Dendritic cell treated with granulocyte-macrophage colony-stimulating factor and Interleukin-4, amounts not matched to agents 40 ng/mL and 50 ng/mL, for 4 days (primary cell): ENCODE measurements at regions of chr7 and their contacts with region 1.

Region 1: GRCh38 chr7:129664029-129665012 is 52.8 kb downstream of the NRF1 start:
- H3K4me3 Mint-ChIP-seq: no peak overlapping the region
- H3K27ac Mint-ChIP-seq: no peak overlapping the region
- H3K4me1 Mint-ChIP-seq: peaks cover 14% of the 10 kb centered on the region
- H3K27me3 Mint-ChIP-seq: no peaks in the 10 kb centered on the region

Region 2: GRCh38 chr7:129471402-129471827 is 192.9 kb before region 1 on chr7:
- intact Hi-C with region 1: no loop called
- H3K4me3 Mint-ChIP-seq: no peak overlapping the region
- H3K27ac Mint-ChIP-seq: no peak overlapping the region
- H3K4me1 Mint-ChIP-seq: no peaks in the 10 kb centered on the region
- H3K27me3 Mint-ChIP-seq: no peaks in the 10 kb centered on the region

Region 3: DNA sequence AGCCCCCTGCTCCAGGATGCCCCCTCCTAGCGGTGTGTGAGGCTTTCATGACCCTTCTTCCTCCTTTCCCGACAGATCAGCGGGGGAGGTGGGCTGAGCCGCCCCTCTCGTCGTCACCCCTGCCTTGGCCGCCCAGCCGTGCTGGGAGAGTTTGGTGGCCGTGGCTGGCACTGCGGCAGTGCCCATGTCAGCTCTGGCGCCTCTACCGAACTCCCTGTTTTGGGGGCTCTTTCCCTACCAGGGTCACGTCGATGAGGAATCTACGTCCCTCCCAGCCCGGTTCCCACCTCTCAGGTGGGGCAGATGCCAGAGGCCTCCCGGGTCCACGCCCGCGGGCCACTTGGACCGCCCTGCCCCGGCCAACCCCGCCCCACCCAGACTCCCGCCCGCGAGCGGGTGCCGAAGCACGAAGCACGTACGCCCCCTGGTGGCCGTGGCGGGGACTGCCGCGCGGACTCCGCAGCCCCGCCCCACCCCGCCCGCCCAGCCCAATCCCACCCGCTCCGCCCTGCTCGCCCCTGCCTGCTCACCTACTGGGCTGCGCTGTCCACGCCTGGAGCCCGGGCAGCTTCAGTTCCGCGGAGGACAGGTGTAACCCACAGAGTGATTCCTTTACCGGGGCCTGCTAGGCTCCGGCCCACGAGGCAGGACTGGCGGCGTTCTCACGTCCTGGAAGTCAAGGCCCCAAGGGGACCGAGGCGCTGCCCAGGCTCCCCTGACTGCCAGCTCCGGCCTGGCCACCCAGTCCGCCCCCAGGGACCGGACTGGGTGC is 161.4 kb after region 1 on chr7:
- intact Hi-C with region 1: loop called (anchors 1 kb)
- H3K4me3 Mint-ChIP-seq: peak overlapping the region; percentile 92
- H3K27ac Mint-ChIP-seq: peak overlapping the region; percentile 52
- H3K4me1 Mint-ChIP-seq: peaks cover 23% of the 10 kb centered on the region
- H3K27me3 Mint-ChIP-seq: peaks cover 22% of the 10 kb centered on the region

Region 4: GRCh38 chr7:130356121-130356875 is 692.0 kb after region 1 on chr7:
- intact Hi-C with region 1: no loop called
- H3K4me3 Mint-ChIP-seq: no peak overlapping the region
- H3K27ac Mint-ChIP-seq: no peak overlapping the region
- H3K4me1 Mint-ChIP-seq: no peaks in the 10 kb centered on the region
- H3K27me3 Mint-ChIP-seq: no peaks in the 10 kb centered on the region